ENCODE measurements at regions of chr1 and their contacts with region 1.

Region 1: GRCh38 chr1:67347688-67348472 is 40.2 kb downstream of the IL12RB2 start:
- DNase-seq: peak; percentile 76
- ATAC-seq: peak; percentile 94
- H3K4me3 ChIP-seq: peak overlapping the region; percentile 41; the same call in 1 of the 2 replicates
- H3K27ac ChIP-seq: no peak overlapping the region
- H3K4me1 ChIP-seq: peaks cover 13% of the 10 kb centered on the region
- H3K27me3 ChIP-seq: no peaks in the 10 kb centered on the region
- CTCF ChIP-seq: peak; percentile 92

Region 2: DNA sequence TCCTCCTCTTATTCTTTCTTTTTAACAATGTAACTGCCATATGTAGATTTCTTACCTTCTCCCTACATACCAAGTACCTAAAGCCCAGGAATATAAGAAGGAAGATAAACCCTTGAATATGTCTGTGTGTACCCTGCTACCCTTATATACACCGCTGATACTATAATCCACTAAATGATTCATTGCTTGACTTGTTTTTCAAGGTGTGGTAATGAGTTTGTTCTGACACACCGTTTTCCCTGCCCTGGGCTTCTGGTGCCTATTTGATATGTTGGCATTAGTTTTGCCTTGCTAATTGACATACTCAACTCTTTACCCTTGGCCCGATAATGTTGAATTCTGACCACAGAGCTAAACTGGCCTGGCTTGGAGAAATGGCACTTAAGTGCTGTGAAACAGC is 117.3 kb before region 1 on chr1:
- CTCF ChIA-PET with region 1: interaction called, 4 read pairs
- POLR2A ChIA-PET with region 1: no interaction called
- intact Hi-C with region 1: loop called (anchors 2 kb)
- DNase-seq: peak; percentile 72
- ATAC-seq: peak; percentile 66
- H3K4me3 ChIP-seq: no peak overlapping the region
- H3K27ac ChIP-seq: peak overlapping the region; percentile 47
- H3K4me1 ChIP-seq: peaks cover 26% of the 10 kb centered on the region
- H3K27me3 ChIP-seq: no peaks in the 10 kb centered on the region
- CTCF ChIP-seq: no peak

Region 3: DNA sequence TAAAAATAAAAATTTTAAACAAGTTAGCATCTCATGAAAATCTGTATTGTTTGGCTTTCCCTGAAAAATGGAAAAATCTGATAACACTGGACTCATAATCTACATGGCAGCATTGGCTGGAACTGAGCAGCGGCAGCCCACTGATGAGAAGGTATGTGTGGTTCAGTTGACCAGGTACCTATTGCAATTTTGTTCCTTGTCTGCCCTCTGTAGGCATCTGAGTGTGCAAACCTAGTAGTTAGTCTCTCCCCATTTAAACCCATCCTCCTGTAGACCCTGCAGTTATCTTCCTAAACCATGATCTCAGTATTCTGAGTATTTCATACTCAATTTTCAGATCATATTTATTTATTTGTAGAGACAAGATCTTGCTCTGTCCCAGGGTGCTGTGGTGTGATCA is 141.8 kb after region 1 on chr1:
- CTCF ChIA-PET with region 1: interaction called, 3 read pairs
- POLR2A ChIA-PET with region 1: no interaction called
- intact Hi-C with region 1: loop called (anchors 1 kb)
- DNase-seq: peak; percentile 42
- ATAC-seq: peak; percentile 86
- H3K4me3 ChIP-seq: no peak overlapping the region
- H3K27ac ChIP-seq: no peak overlapping the region
- H3K4me1 ChIP-seq: no peaks in the 10 kb centered on the region
- H3K27me3 ChIP-seq: no peaks in the 10 kb centered on the region
- CTCF ChIP-seq: peak; percentile 55; the same call in 1 of the 2 replicates

Measured in PC-3 (cell line).